HepG2 (cell line): ENCODE measurements at regions of chr2 and their contacts with region 1.

Region 1: GRCh38 chr2:121400201-121400600 is 115.2 kb upstream of the TFCP2L1 start:
- DNase-seq: no peak
- ATAC-seq: no peak
- H3K4me3 ChIP-seq: no peak overlapping the region
- H3K27ac ChIP-seq: no peak overlapping the region
- H3K4me1 ChIP-seq: no peaks in the 10 kb centered on the region
- H3K27me3 ChIP-seq: no peaks in the 10 kb centered on the region
- CTCF ChIP-seq: no peak
- EP300 ChIP-seq: no peak
- POLR2A ChIP-seq: no peak
- RAD21 ChIP-seq: no peak

Region 2: DNA sequence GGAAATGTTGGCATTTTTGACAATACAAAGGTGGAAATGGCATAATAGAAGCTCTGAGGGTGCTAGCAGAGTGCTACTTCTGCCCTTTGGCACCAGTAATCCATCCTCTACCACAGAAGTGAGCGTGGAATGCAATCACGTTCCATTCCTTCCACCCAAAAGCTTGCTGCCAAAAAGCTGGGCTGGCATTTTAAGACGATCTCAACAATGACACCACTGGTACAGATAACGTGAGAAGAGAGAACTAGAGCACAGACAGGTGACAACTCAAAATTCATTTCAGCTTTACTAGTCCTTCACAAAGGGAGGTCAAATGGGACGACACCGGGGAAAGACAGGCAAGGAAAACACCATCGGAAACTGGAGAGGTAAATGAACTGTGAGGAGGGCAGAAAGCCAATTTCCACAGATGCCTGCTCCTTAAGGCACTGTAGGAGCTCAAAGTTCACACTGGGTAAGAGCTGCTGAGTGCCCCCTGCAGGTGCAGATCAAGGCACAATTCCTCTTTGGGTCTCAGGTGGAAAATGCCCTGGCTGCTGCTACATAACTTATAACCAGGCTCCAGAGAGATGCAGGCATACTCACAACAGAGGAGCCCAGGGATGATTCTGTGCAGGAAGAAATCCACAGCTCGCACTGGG is 79.8 kb after region 1 on chr2:
- CTCF ChIA-PET with region 1: no interaction called
- POLR2A ChIA-PET with region 1: no interaction called
- in situ Hi-C with region 1: no loop called
- intact Hi-C with region 1: loop called (anchors 5 kb)
- DNase-seq: no peak
- ATAC-seq: peak; percentile 18; the same call in 1 of the 3 replicates
- H3K4me3 ChIP-seq: no peak overlapping the region
- H3K27ac ChIP-seq: no peak overlapping the region
- H3K4me1 ChIP-seq: peaks cover 14% of the 10 kb centered on the region
- H3K27me3 ChIP-seq: no peaks in the 10 kb centered on the region
- CTCF ChIP-seq: no peak
- EP300 ChIP-seq: no peak
- POLR2A ChIP-seq: no peak
- RAD21 ChIP-seq: no peak

Region 3: GRCh38 chr2:121519732-121520640 is 119.8 kb after region 1 on chr2:
- CTCF ChIA-PET with region 1: no interaction called
- POLR2A ChIA-PET with region 1: no interaction called
- in situ Hi-C with region 1: no loop called
- intact Hi-C with region 1: loop called (anchors 2 kb)
- DNase-seq: peak; percentile 35
- ATAC-seq: peak; percentile 67
- H3K4me3 ChIP-seq: no peak overlapping the region
- H3K27ac ChIP-seq: no peak overlapping the region
- H3K4me1 ChIP-seq: no peaks in the 10 kb centered on the region
- H3K27me3 ChIP-seq: no peaks in the 10 kb centered on the region
- CTCF ChIP-seq: no peak
- EP300 ChIP-seq: no peak
- POLR2A ChIP-seq: no peak
- RAD21 ChIP-seq: no peak

Region 4: DNA sequence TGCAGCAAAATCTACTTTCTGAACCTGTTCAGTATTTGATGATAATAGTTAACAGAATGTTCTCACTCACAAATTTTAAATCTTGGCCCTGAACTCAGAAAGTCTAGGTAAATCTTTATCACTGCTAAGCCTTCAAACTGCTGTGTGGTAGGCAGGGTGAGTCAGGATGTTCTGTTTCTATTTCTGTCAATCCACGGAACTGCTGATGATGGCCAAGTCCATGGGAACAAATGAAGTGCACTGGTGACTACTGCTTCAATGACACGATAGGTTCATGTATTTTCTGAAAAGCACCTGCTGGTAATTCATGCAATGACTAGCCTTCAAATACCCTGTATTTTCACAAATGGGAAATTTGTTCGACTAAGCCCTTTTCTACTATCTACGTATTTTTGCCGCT is 322.3 kb after region 1 on chr2:
- CTCF ChIA-PET with region 1: interaction called, 18 read pairs
- POLR2A ChIA-PET with region 1: no interaction called
- in situ Hi-C with region 1: loop called (anchors 5 kb)
- intact Hi-C with region 1: loop called (anchors 1 kb)
- DNase-seq: no peak
- ATAC-seq: peak; percentile 34
- H3K4me3 ChIP-seq: no peak overlapping the region
- H3K27ac ChIP-seq: no peak overlapping the region
- H3K4me1 ChIP-seq: peaks cover 17% of the 10 kb centered on the region
- H3K27me3 ChIP-seq: no peaks in the 10 kb centered on the region
- CTCF ChIP-seq: no peak
- EP300 ChIP-seq: no peak
- POLR2A ChIP-seq: no peak
- RAD21 ChIP-seq: no peak

Region 5: DNA sequence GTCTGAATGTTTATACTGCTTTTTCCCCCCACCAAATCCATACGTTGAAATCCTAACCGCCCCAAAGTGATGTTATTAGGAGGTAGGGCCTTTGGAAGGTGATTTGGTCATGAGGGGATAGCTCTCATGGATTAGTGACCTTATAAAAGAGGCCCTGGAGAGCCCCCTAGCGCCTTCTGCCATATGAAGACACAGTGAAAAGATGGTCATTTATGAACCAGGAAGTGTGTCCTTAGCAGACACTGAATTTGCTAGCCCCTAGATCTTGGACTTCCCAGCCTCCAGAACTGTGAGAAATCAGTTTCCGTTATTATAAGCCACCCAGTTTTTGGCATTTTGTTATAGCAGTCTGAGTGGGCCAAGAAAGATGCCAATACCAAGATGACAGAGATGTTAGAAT is 348.0 kb after region 1 on chr2:
- CTCF ChIA-PET with region 1: interaction called, 9 read pairs
- POLR2A ChIA-PET with region 1: interaction called, 3 read pairs
- in situ Hi-C with region 1: no loop called
- intact Hi-C with region 1: loop called (anchors 1 kb)
- DNase-seq: peak; percentile 55
- ATAC-seq: peak; percentile 93
- H3K4me3 ChIP-seq: no peak overlapping the region
- H3K27ac ChIP-seq: no peak overlapping the region
- H3K4me1 ChIP-seq: no peaks in the 10 kb centered on the region; the same call in 1 of the 2 replicates
- H3K27me3 ChIP-seq: no peaks in the 10 kb centered on the region
- CTCF ChIP-seq: peak; percentile 75
- EP300 ChIP-seq: no peak
- POLR2A ChIP-seq: no peak
- RAD21 ChIP-seq: peak; percentile 49; the same call in 1 of the 2 replicates